ENCODE measurements at regions of chr6 and their contacts with region 1.

Region 1: DNA sequence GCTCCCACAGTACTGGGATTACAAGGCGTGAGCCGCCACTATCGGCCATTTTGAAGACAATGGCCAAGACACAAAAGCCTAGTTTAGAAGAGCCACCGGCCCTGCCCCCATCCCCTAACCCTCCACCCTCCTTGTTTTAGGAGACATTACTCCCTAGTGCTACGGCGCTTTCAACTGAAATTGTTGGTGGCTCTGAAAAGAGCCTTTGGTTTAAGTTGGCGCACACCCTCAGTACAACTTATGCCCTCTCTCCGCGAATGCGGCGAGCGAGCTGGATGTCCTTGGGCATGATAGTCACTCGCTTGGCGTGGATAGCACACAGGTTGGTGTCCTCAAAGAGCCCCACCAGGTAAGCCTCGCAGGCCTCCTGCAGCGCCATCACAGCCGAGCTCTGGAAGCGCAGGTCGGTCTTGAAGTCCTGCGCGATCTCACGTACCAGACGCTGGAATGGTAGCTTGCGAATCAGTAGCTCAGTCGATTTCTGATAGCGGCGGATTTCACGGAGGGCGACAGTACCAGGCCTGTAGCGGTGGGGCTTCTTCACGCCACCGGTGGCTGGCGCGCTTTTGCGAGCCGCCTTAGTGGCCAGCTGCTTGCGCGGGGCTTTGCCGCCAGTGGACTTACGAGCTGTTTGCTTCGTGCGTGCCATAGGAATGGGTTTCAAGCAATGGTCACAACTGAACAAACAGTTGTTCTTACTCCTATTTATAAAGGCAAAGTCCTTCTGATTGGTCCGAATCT is 114.9 kb upstream of the BTN3A2 start:
- DNase-seq: no peak
- H3K4me3 ChIP-seq: peak overlapping the region; percentile 77
- H3K27ac ChIP-seq: peak overlapping the region; percentile 87
- H3K27me3 ChIP-seq: no peaks in the 10 kb centered on the region
- CTCF ChIP-seq: peak; percentile 50

Region 2: DNA sequence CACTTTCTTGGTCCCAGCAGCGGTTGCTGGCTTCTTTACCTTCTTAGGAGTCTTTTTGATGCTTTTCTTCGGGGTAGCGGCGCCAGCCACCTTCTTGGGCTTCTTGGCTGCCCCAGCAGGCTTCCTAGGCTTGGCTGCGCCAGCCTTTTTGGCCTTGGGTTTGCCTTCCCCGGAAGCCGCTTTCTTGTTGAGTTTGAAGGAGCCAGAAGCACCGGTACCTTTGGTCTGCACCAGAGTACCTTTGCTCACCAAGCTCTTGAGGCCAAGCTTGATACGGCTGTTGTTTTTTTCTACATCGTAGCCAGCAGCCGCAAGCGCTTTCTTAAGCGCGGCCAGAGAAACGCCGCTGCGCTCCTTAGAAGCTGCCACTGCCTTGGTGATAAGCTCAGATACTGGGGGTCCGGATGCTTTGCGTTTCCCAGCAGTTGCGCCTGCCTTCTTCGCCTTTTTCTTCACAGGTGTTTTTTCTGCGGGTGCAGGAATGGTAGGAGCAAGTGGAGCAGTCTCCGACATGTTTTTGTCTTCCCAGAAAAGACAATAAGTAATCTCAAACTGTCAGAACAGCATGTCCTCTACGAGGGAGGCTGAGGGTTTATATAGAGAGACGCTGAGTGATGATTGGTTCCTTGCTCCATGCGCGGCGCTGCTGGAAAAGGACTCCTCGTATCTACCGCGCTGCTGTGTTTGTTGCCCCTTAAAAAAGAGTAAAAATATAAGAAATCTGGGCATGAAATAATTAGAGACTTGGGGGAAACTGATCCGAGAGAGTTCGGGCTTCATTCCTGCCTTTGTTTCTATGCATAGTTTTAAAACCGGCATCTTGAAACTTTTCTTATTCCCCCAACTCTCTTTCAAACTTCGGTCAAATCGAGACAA is 15.5 kb before region 1 on chr6:
- CTCF ChIA-PET with region 1: interaction called, 14 read pairs
- POLR2A ChIA-PET with region 1: interaction called, 35 read pairs
- DNase-seq: no peak
- H3K4me3 ChIP-seq: peak overlapping the region; percentile 65
- H3K27ac ChIP-seq: peak overlapping the region; percentile 91
- H3K27me3 ChIP-seq: no peaks in the 10 kb centered on the region
- CTCF ChIP-seq: no peak

Measured in AG04450 (cell line).